ENCODE measurements at regions of chr1 and their contacts with region 1.

Region 1: GRCh38 chr1:10209905-10210810 is at the start of gene KIF1B:
- DNase-seq: peak; percentile 96
- ATAC-seq: peak; percentile 98
- H3K4me3 Mint-ChIP-seq: peak within 1 kb of the TSS; percentile 80
- H3K27ac Mint-ChIP-seq: peak within 1 kb of the TSS; percentile 57
- H3K4me1 Mint-ChIP-seq: peaks cover 26% of the 10 kb centered on the region
- H3K27me3 Mint-ChIP-seq: no peaks in the 10 kb centered on the region
- CTCF ChIP-seq: peak; percentile 99
- total RNA-seq, gene KIF1B: 7.1 to 8.9 TPM

Region 2: DNA sequence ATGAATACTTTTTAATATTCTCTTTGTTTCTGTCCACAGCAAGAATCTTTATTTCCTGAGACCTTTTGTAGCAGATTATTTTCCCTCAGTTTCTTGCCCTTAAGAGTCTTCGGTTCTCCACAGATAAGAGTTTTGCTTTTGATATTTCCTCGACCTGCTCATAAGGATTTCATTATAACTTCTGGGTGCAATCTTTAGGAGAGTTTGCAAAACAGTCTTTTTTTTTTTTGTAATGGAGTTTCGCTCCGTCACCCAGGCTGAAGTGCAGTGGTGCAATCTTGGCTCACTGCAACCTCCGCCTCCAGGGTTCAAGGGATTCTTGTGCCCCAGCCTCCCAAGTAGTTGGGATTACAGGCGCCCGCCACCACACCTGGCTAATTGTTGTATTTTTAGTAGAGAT is 187.5 kb before region 1 on chr1:
- CTCF ChIA-PET with region 1: no interaction called
- POLR2A ChIA-PET with region 1: no interaction called
- intact Hi-C with region 1: no loop called
- DNase-seq: no peak
- ATAC-seq: no peak
- H3K4me3 Mint-ChIP-seq: no peak overlapping the region
- H3K27ac Mint-ChIP-seq: no peak overlapping the region
- H3K4me1 Mint-ChIP-seq: peaks cover 5% of the 10 kb centered on the region
- H3K27me3 Mint-ChIP-seq: no peaks in the 10 kb centered on the region
- CTCF ChIP-seq: no peak

Region 3: DNA sequence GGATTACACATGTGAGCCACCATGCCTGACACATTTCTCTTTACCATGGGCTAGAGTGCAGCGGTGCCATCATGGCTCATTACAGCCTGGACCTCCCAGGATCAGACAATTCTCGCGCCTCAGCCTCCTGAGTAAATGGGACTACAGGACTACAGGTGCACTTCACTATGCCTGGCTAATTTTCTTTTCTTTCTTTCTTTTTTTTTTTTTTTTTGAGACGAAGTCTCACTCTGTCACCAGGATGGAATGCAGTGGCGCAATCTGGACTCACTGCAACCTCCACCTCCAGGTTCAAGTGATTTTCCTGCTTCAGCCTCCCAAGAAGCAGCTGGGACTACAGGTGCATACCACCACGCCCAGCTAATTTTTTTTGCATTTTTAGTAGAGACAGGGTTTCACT is 14.6 kb before region 1 on chr1:
- CTCF ChIA-PET with region 1: interaction called, 16 read pairs
- POLR2A ChIA-PET with region 1: interaction called, 5 read pairs
- intact Hi-C with region 1: no loop called
- DNase-seq: no peak
- ATAC-seq: no peak
- H3K4me3 Mint-ChIP-seq: no peak overlapping the region
- H3K27ac Mint-ChIP-seq: no peak overlapping the region
- H3K4me1 Mint-ChIP-seq: no peaks in the 10 kb centered on the region
- H3K27me3 Mint-ChIP-seq: peaks cover 9% of the 10 kb centered on the region
- CTCF ChIP-seq: no peak

Region 4: GRCh38 chr1:10253755-10254154 is 43.6 kb after region 1 on chr1:
- CTCF ChIA-PET with region 1: interaction called, 23 read pairs
- POLR2A ChIA-PET with region 1: no interaction called
- intact Hi-C with region 1: no loop called
- DNase-seq: no peak
- ATAC-seq: no peak
- H3K4me3 Mint-ChIP-seq: no peak overlapping the region
- H3K27ac Mint-ChIP-seq: no peak overlapping the region
- H3K4me1 Mint-ChIP-seq: peaks cover 4% of the 10 kb centered on the region
- H3K27me3 Mint-ChIP-seq: no peaks in the 10 kb centered on the region
- CTCF ChIP-seq: no peak

Region 5: DNA sequence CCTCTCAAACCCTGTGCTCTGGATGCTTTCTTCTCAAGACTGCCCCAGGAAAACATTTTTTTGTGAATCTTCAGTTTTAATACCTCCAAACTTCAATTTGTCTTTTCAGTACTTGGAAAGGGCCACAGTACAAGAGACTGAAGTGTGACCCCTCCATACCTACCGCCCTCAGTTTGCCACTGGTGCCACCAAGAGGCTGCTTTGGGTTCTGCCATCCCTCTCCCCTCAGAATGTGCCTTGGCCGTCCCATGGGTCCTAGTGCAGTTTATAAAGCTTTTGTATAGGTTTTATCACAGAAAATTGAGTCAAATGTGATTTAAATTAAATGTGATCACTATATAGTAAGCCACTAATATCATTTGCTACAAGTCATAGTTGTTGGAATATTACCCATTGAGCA is 127.9 kb after region 1 on chr1:
- CTCF ChIA-PET with region 1: interaction called, 49 read pairs
- POLR2A ChIA-PET with region 1: no interaction called
- intact Hi-C with region 1: loop called (anchors 10 kb)
- DNase-seq: peak; percentile 70
- ATAC-seq: peak; percentile 90
- H3K4me3 Mint-ChIP-seq: no peak overlapping the region
- H3K27ac Mint-ChIP-seq: no peak overlapping the region
- H3K4me1 Mint-ChIP-seq: no peaks in the 10 kb centered on the region
- H3K27me3 Mint-ChIP-seq: no peaks in the 10 kb centered on the region
- CTCF ChIP-seq: peak; percentile 74